Natural killer cell (primary cell): ENCODE measurements at regions of chr2 and their contacts with region 1.

Region 1: DNA sequence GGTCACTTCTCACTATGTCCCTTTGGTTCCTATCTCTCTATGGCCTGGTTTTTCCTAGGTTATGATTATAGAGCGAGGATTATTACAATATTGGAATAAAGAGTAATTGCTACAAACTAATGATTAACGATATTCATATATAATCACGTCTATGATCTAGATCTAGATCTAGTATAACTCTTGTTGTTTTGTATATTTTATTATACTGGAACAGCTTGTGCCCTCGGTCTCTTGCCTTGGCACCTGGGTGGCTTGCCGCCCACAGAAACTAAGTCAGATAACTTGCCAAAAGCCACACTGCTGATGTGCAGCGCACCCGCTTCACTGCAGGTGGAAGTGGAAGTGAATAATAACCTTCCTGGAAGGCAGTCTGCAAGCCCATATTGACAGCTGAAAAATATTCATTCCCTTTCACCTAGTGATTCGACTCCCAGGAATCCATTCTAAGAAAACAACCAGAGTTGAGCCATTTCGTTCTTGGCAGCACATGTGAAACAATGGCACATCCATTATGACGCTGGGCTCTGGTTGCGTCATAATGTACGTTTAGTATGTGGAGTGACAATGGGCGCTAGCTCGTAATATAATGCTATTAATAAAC is 725 bp upstream of the ANKRD53 start:
- DNase-seq: peak; percentile 20 to 56
- ATAC-seq: peak in 1 of 3 donors; percentile 23
- H3K4me3 ChIP-seq: peak overlapping the region; percentile 73
- H3K4me3 Mint-ChIP-seq: peak overlapping the region; percentile 92
- H3K27ac ChIP-seq: peak overlapping the region; percentile 84
- H3K27ac Mint-ChIP-seq: peak overlapping the region; percentile 90 to 94
- H3K4me1 ChIP-seq: peaks cover 23% of the 10 kb centered on the region
- H3K4me1 Mint-ChIP-seq: peaks cover 21 to 22% of the 10 kb centered on the region in 2 donors
- H3K27me3 ChIP-seq: no peaks in the 10 kb centered on the region
- H3K27me3 Mint-ChIP-seq: peaks cover 0 to 4% of the 10 kb centered on the region in 2 donors
- CTCF ChIP-seq: peak; percentile 44

Region 2: DNA sequence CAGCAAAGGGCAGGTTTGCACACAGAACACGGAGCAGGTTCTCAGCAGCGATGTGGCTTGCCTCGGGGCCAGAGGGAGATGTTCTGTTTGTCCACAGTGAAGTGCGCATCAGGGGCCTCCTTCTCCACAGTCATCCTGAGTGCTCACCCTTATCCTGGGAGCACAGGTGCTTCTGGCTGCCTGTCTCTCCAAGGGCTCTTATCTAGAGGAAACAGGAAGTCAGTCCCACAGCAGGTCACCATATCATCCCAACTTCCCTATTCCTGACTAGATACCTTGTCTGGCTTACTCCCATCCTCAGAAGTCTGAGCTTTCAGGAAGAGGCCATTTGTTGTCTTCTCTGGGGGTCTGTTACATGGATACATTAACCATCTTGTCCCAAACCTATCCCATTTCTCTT is 142.1 kb before region 1 on chr2 and contains the start of gene CD207:
- intact Hi-C with region 1: no loop called
- DNase-seq: no peak
- ATAC-seq: no peak
- H3K4me3 ChIP-seq: no peak within 1 kb of the TSS
- H3K4me3 Mint-ChIP-seq: no peak within 1 kb of the TSS
- H3K27ac ChIP-seq: no peak within 1 kb of the TSS
- H3K27ac Mint-ChIP-seq: no peak within 1 kb of the TSS
- H3K4me1 ChIP-seq: peaks cover 19% of the 10 kb centered on the region
- H3K4me1 Mint-ChIP-seq: peaks cover 14 to 32% of the 10 kb centered on the region in 2 donors
- H3K27me3 ChIP-seq: no peaks in the 10 kb centered on the region
- H3K27me3 Mint-ChIP-seq: no peaks in the 10 kb centered on the region
- CTCF ChIP-seq: no peak
- total RNA-seq, gene CD207: not detected

Region 3: DNA sequence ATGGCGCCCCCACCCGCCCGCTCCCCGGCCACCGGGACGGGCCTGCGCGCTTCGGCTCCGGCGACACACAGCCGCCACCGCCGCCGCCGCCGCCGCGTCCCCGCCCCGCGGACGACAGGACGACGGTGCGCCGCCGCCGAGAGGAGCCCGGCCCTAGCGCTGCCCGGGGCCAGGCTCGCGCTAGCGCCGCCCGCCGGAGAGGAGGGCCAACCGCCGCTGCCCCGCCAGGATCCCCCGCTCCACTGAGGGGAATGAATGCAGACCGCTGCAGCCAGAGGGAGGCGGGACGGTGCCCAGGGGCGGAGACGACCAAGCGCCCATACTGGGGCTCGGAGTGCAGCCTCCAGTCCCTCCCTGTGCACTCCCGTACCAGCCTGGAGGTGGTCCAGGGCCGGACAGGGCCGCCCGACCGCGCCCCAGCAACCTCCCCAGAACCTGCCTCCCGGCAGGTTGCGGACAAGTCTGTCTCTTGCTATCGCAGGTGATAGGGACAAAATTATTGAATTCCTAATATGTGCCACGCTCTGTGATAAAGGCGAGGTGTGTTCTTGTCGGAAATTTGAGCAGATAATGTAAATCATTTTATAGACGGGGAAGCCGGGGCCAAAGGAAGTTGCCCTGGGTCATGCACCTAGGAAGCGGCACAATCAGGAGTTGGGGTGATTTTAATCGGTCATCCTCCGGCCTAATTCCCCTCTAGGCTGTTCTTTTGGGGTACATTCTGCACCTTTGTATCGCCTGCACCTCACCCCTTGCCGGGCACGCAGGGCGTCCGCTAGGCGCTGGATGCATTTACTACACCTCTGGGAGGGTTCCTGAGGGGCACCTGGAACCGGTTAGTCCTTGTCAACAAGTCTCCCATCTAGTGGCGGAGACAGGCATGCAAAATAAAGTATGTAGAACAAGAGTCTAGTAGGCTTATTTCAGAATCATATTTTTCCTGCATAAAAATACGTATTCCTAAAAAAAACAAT is 17.3 kb after region 1 on chr2 and contains the start of gene TEX261:
- intact Hi-C with region 1: loop called (anchors 2 kb)
- DNase-seq: peak; percentile 90 to 92
- ATAC-seq: peak; percentile 96 to 99 (median 98)
- H3K4me3 ChIP-seq: peak within 1 kb of the TSS; percentile 90
- H3K4me3 Mint-ChIP-seq: peak within 1 kb of the TSS; percentile 91
- H3K27ac ChIP-seq: peak within 1 kb of the TSS; percentile 71
- H3K27ac Mint-ChIP-seq: peak within 1 kb of the TSS; percentile 86 to 92
- H3K4me1 ChIP-seq: peaks cover 27% of the 10 kb centered on the region
- H3K4me1 Mint-ChIP-seq: peaks cover 33 to 35% of the 10 kb centered on the region in 2 donors
- H3K27me3 ChIP-seq: no peaks in the 10 kb centered on the region
- H3K27me3 Mint-ChIP-seq: no peaks in the 10 kb centered on the region
- CTCF ChIP-seq: peak; percentile 54
- total RNA-seq, gene TEX261: 30.3 to 44.2 (median 43.2) TPM

Region 4: GRCh38 chr2:71068218-71069035 is 90.7 kb after region 1 on chr2 and contains the start of gene NAGK:
- intact Hi-C with region 1: loop called (anchors 1 kb)
- DNase-seq: peak; percentile 98 to 99
- ATAC-seq: peak; percentile 83 to 93 (median 88)
- H3K4me3 ChIP-seq: peak within 1 kb of the TSS; percentile 80
- H3K4me3 Mint-ChIP-seq: peak within 1 kb of the TSS; percentile 97
- H3K27ac ChIP-seq: peak within 1 kb of the TSS; percentile 93
- H3K27ac Mint-ChIP-seq: peak within 1 kb of the TSS; percentile 98 to 99
- H3K4me1 ChIP-seq: peaks cover 49% of the 10 kb centered on the region
- H3K4me1 Mint-ChIP-seq: peaks cover 55% of the 10 kb centered on the region in 2 donors
- H3K27me3 ChIP-seq: no peaks in the 10 kb centered on the region
- H3K27me3 Mint-ChIP-seq: peaks cover 2 to 8% of the 10 kb centered on the region in 2 donors
- CTCF ChIP-seq: no peak
- total RNA-seq, gene NAGK: 67.3 to 93.6 (median 74.9) TPM